GM10248 (cell line): ENCODE measurements at regions of chr7 and their contacts with region 1.

Region 1: GRCh38 chr7:76020031-76020714 is 25.8 kb upstream of the TMEM120A start:
- DNase-seq: peak; percentile 79
- CTCF ChIP-seq: peak; percentile 82

Region 2: GRCh38 chr7:75861636-75862035 is 158.5 kb before region 1 on chr7:
- CTCF ChIA-PET with region 1: interaction called, 193 read pairs
- POLR2A ChIA-PET with region 1: no interaction called
- DNase-seq: no peak
- CTCF ChIP-seq: no peak

Region 3: GRCh38 chr7:75878769-75879611 is 141.2 kb before region 1 on chr7 and contains the start of gene RHBDD2:
- CTCF ChIA-PET with region 1: interaction called, 25 read pairs
- POLR2A ChIA-PET with region 1: no interaction called
- DNase-seq: peak; percentile 100
- CTCF ChIP-seq: no peak

Region 4: DNA sequence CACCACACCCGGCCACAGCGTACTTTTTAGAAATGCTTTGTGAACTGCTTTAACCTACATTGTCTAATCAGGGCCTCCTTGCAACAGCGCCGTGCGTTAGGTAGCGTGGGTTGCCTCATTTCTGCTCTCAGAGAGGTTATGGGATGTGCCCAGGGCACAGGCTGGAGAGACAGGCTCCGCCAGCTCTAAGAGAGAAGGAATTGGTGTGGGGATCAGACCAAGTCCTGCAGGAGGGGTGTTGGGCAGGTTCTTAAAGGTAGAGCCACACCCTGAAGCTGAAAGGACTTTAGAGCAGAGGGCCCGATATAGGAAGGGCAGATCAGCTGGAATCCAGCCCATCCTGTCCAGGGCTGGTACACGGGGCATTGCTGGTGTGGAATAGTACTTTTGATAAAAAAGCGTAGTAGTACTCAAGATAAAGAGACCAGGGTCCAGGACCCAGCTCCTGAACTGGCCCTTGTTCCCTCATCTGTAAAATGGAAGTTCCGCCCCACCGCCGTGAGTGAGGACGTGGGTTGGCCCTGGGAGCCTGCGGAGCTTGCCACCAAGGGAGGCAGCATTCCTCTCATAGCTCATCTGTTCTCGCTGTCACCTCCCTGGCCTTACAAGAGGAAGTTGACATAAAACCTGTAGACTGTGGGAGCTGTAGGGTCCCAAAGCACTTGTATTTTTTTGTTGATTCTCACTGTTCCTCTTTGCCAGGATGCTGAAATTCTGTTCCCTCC is 63.0 kb before region 1 on chr7:
- CTCF ChIA-PET with region 1: interaction called, 17 read pairs
- POLR2A ChIA-PET with region 1: no interaction called
- DNase-seq: no peak
- CTCF ChIP-seq: no peak

Region 5: DNA sequence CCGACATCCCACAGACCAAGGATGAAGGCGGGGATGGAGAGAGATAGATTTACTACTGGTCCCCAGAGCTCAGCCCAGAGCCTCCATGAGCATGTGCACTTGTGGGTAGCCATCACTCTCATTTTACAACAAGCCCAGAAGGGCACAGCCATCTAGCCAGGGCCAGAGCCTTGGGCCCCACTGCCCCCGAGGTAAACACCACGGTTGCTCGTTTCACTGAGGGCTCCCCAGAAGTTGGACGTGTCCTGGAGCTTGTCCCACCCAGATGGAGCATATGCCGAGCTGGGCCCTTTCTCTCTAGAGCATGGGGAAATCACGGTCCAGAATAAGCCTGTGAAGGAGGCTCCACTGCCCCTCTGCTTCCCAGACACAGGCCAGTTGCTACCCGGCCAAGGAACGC is 16.8 kb before region 1 on chr7:
- CTCF ChIA-PET with region 1: interaction called, 73 read pairs
- POLR2A ChIA-PET with region 1: no interaction called
- DNase-seq: no peak
- CTCF ChIP-seq: no peak

Region 6: GRCh38 chr7:76047811-76048667 is 27.9 kb after region 1 on chr7 and contains the starts of genes MDH2 and STYXL1:
- CTCF ChIA-PET with region 1: interaction called, 12 read pairs
- POLR2A ChIA-PET with region 1: no interaction called
- DNase-seq: peak; percentile 98
- CTCF ChIP-seq: no peak